K562 (cell line): ENCODE measurements at regions of chr12 and their contacts with region 1.

Region 1: GRCh38 chr12:57590536-57591479 is at the start of gene PIP4K2C:
- DNase-seq: peak; percentile 92 to 97 (median 95)
- ATAC-seq: peak; percentile 96
- H3K4me3 ChIP-seq: peak within 1 kb of the TSS; percentile 72
- H3K27ac ChIP-seq: peak within 1 kb of the TSS; percentile 84
- H3K4me1 ChIP-seq: peaks cover 22 to 23% of the 10 kb centered on the region in 2 experiments
- H3K27me3 ChIP-seq: no peaks in the 10 kb centered on the region
- CTCF ChIP-seq: no peak
- EP300 ChIP-seq: no peak
- POLR2A ChIP-seq: peak; percentile 78
- RAD21 ChIP-seq: no peak; a peak in 1 of 4 replicates
- polyA plus RNA-seq, gene PIP4K2C: 9.0 to 10.8 TPM

Region 2: GRCh38 chr12:57609101-57609780 is 18.4 kb after region 1 on chr12:
- CTCF ChIA-PET with region 1: no interaction called
- POLR2A ChIA-PET with region 1: interaction called, 19 read pairs
- in situ Hi-C with region 1: no loop called
- intact Hi-C with region 1: no loop called
- DNase-seq: peak; percentile 39 to 60 (median 50)
- ATAC-seq: peak; percentile 15
- H3K4me3 ChIP-seq: no peak overlapping the region
- H3K27ac ChIP-seq: peak overlapping the region; percentile 56; the same call in 2 of the 3 replicates
- H3K4me1 ChIP-seq: peaks cover 53 to 62% of the 10 kb centered on the region in 2 experiments
- H3K27me3 ChIP-seq: no peaks in the 10 kb centered on the region
- CTCF ChIP-seq: no peak
- EP300 ChIP-seq: no peak
- POLR2A ChIP-seq: 0 out of 2 replicates have a peak, but pooled peaks have one; percentile 39
- RAD21 ChIP-seq: no peak

Region 3: GRCh38 chr12:57614178-57614947 is 23.6 kb after region 1 on chr12:
- CTCF ChIA-PET with region 1: no interaction called
- POLR2A ChIA-PET with region 1: interaction called, 19 read pairs
- in situ Hi-C with region 1: no loop called
- intact Hi-C with region 1: no loop called
- DNase-seq: peak; percentile 81 to 91 (median 84)
- ATAC-seq: peak; percentile 79
- H3K4me3 ChIP-seq: no peak overlapping the region
- H3K27ac ChIP-seq: peak overlapping the region; percentile 17; the same call in 2 of the 3 replicates
- H3K4me1 ChIP-seq: peaks cover 52 to 58% of the 10 kb centered on the region in 2 experiments
- H3K27me3 ChIP-seq: no peaks in the 10 kb centered on the region
- CTCF ChIP-seq: no peak
- EP300 ChIP-seq: no peak
- POLR2A ChIP-seq: no peak
- RAD21 ChIP-seq: no peak

Region 4: GRCh38 chr12:57641699-57642442 is 51.1 kb after region 1 on chr12:
- CTCF ChIA-PET with region 1: no interaction called
- POLR2A ChIA-PET with region 1: no interaction called
- in situ Hi-C with region 1: no loop called
- intact Hi-C with region 1: no loop called
- DNase-seq: peak in 1 of 4 experiments; percentile 48
- ATAC-seq: peak; percentile 15; the same call in 1 of the 3 replicates
- H3K4me3 ChIP-seq: no peak overlapping the region
- H3K27ac ChIP-seq: peak overlapping the region; percentile 25; the same call in 1 of the 3 replicates
- H3K4me1 ChIP-seq: peaks cover 7 to 22% of the 10 kb centered on the region in 2 experiments; a peak in 3 of 5 replicates
- H3K27me3 ChIP-seq: no peaks in the 10 kb centered on the region
- CTCF ChIP-seq: no peak
- EP300 ChIP-seq: no peak
- POLR2A ChIP-seq: no peak
- RAD21 ChIP-seq: no peak